ENCODE measurements at regions of chr6 and their contacts with region 1.

Region 1: GRCh38 chr6:12008366-12009179 is 3.5 kb upstream of the HIVEP1 start:
- DNase-seq: peak; percentile 87
- H3K4me3 ChIP-seq: peak overlapping the region; percentile 41
- H3K27ac ChIP-seq: peak overlapping the region; percentile 96
- H3K4me1 ChIP-seq: no peaks in the 10 kb centered on the region
- H3K27me3 ChIP-seq: no peaks in the 10 kb centered on the region
- CTCF ChIP-seq: no peak

Region 2: DNA sequence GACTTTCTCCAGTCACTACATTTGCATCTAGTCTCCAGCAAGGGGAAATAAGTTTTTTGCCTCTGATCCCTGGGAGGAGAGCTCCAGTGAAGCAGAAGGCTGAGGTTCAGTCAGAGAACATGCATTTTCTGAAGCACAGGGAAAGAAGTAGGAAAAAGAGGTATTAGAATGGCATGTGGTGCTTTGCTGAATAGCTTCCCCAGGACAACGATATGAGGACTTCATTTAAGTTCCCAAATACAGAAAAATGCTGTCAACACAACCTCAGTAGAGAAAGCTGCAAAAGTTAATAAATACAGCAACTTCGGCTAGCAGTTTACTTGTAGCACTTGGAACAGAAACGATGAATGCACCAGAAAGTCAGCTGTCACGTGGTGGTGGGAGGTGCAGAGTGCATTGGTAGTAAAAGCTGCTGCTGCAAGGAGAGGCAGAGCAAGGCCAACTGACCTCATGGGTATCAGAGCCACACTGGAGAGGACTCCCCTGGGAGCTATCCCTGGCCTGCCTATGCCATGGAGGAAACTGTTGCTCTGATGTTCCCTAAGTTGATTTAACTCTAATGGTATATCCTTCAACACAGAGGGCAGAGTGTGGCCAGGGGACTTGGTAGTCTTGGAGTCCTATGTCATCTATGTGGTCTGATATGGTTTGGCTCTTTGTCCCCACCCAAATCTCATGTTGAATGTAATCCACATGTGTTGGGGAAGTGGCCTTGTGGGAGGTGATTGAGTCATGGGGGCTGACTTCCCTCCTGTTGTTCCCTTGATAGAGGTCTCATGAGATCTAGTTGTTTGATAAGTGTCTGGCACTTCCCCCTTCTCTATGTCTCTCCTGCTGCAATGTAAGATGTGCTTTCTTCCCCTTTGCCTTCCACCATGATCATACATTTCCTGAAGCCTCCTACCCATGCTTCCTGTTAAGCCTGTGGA is 315.9 kb before region 1 on chr6:
- intact Hi-C with region 1: loop called (anchors 10 kb)
- DNase-seq: no peak
- H3K4me3 ChIP-seq: no peak overlapping the region
- H3K27ac ChIP-seq: no peak overlapping the region
- H3K4me1 ChIP-seq: no peaks in the 10 kb centered on the region
- H3K27me3 ChIP-seq: no peaks in the 10 kb centered on the region
- CTCF ChIP-seq: no peak

Region 3: DNA sequence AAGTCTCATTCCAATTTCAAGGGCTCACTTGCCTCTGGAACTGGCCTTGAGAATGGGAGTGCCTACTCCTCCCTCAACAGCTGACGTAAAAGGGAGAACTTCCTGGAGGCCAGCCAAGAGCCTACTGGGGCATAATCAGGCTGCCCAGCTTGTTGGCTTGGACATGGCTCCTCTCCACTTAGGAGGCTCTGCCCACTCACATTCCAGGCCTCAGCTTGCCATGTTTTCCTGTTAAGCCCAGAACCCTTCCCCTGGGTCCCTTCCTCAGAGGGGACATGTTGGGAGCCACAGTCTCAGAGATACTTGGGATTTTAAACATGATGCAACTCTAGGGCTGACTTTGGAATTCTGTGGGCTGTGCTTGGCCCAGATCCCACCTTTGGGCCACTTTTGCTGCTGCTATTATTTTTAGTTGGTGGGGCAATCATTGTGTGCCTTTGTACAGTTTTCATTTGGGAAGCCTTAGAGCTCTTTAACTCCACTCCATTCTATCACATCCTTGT is 198.5 kb before region 1 on chr6:
- intact Hi-C with region 1: loop called (anchors 10 kb)
- DNase-seq: peak; percentile 94
- H3K4me3 ChIP-seq: no peak overlapping the region
- H3K27ac ChIP-seq: peak overlapping the region; percentile 6
- H3K4me1 ChIP-seq: no peaks in the 10 kb centered on the region
- H3K27me3 ChIP-seq: no peaks in the 10 kb centered on the region
- CTCF ChIP-seq: no peak

Region 4: DNA sequence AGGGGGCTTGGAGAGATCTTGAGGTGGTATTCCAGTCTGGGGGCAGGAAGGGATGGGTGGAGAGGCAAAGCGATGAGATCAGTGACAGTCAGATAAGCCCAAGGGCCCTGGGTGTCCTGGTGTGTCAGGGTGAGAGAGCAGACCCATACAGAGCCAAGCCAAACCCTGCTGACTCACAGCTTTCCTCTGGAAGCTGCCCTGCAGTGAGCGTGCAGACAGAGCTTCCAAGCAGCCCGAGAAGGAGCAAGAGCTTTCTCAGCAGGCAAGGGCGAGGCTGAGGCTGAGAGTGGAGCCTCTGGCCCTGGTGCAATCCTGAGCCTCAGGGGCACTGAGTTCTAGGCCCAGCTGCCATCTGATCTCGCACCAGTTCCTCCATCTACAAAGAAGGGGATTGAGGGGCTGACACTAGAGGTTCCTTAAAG is 87.5 kb before region 1 on chr6:
- intact Hi-C with region 1: loop called (anchors 5 kb)
- DNase-seq: peak; percentile 64
- H3K4me3 ChIP-seq: no peak overlapping the region
- H3K27ac ChIP-seq: peak overlapping the region; percentile 9
- H3K4me1 ChIP-seq: peaks cover 4% of the 10 kb centered on the region
- H3K27me3 ChIP-seq: no peaks in the 10 kb centered on the region
- CTCF ChIP-seq: no peak

Region 5: GRCh38 chr6:12065321-12066140 is 57.0 kb after region 1 on chr6:
- intact Hi-C with region 1: no loop called
- DNase-seq: no peak
- H3K4me3 ChIP-seq: no peak overlapping the region
- H3K27ac ChIP-seq: no peak overlapping the region
- H3K4me1 ChIP-seq: no peaks in the 10 kb centered on the region
- H3K27me3 ChIP-seq: no peaks in the 10 kb centered on the region
- CTCF ChIP-seq: no peak

Measured in colonic mucosa (tissue), 4 donors.